ENCODE measurements at regions of chr4 and their contacts with region 1.

Region 1: DNA sequence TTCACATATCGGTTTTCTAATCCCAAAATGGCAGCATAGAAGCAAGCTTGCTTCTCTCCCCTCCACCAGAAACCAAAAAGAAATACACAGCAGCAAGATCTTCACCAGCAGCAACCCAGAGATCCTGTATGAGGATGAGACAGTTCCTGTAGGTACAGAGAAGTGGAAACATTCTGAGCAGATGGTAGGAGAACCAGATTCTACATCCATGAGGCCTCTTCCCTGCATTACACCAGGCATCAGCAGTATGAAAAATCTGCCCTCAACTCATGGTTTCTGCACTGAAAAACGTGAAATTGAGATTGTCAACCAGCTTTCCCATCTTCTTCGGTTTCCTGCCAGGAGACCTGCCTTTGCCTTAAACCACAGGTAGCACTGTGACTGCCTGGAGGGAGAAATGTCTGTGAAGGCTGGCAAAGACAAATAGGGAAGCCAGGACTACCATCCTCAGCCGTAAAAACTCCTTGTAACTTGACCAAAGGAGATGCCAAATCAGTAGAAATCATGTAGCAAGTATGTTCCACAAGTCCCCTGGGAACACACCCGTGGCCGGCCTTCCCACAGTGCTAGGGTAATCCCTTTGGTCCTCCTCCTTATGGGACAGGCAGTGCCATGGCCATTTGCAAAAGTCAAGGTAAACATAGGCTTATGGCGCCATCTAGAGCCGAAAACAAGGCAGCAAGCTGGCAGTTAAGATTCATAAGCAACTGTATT is 24.0 kb upstream of the MTHFD2L start:
- DNase-seq: peak; percentile 65
- ATAC-seq: peak; percentile 84

Region 2: DNA sequence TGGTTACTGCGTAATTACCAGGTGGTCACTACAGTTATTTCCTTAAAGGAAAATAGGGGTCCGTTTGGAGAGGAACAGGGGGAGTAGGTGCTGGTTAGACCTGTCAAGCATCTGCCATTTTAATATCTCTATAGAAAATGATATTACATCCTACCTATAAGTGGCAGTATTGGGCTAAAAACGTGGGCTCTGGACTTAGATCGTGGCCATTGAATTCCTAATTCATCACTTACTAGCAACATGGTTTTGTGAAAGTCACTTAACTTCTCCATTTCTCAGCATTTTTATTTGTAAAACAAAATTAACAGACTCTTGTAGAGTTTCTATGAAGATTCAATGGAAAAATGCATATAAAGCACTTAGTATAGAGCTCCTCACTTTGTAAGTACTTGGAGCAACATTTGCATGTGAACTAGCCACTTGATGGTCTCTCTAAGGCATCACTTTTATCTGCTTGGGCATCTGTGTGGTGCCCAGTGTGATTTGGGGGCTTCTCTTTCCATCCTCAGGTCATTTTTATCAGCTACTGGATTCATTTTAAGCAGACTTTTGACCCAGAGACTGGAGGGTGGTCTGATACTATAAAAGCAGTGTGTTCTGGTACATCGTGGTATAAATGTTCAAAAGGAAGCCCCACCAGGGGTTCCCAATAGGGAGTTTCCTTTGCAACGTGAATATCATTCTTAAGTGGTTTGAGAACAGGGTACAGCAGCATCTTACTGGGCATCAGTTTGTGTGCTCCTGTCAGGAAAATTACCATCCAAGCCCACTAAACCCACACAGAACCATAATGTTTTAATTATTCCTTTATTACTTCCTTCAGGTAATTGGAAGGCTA is 471.0 kb before region 1 on chr4:
- intact Hi-C with region 1: loop called (anchors 10 kb)
- DNase-seq: no peak
- ATAC-seq: peak; percentile 53

Region 3: GRCh38 chr4:73729534-73730165 is 404.3 kb before region 1 on chr4:
- intact Hi-C with region 1: loop called (anchors 10 kb)
- DNase-seq: peak; percentile 47
- ATAC-seq: peak; percentile 91

Region 4: GRCh38 chr4:74038161-74039064 is 95.5 kb before region 1 on chr4 and contains the start of gene CXCL3:
- intact Hi-C with region 1: loop called (anchors 10 kb)
- DNase-seq: peak; percentile 82
- ATAC-seq: peak; percentile 96
- total RNA-seq, gene CXCL3: 1.3 TPM

Region 5: GRCh38 chr4:74402692-74403456 is 268.9 kb after region 1 on chr4:
- intact Hi-C with region 1: no loop called
- DNase-seq: no peak
- ATAC-seq: no peak